Caco-2 (cell line): ENCODE measurements at regions of chr5 and their contacts with region 1.

Region 1: GRCh38 chr5:138213161-138214029 is at the start of gene CDC23:
- DNase-seq: peak; percentile 96 to 97
- H3K4me3 ChIP-seq: peak within 1 kb of the TSS; percentile 99
- H3K4me3 Mint-ChIP-seq: peak within 1 kb of the TSS; percentile 99
- H3K27ac Mint-ChIP-seq: peak within 1 kb of the TSS; percentile 99
- H3K4me1 ChIP-seq: no peaks in the 10 kb centered on the region
- H3K4me1 Mint-ChIP-seq: no peaks in the 10 kb centered on the region
- H3K27me3 ChIP-seq: no peaks in the 10 kb centered on the region
- H3K27me3 Mint-ChIP-seq: no peaks in the 10 kb centered on the region
- CTCF ChIP-seq: no peak
- total RNA-seq, gene CDC23: 52.9 and 60.7 TPM in 2 replicates

Region 2: DNA sequence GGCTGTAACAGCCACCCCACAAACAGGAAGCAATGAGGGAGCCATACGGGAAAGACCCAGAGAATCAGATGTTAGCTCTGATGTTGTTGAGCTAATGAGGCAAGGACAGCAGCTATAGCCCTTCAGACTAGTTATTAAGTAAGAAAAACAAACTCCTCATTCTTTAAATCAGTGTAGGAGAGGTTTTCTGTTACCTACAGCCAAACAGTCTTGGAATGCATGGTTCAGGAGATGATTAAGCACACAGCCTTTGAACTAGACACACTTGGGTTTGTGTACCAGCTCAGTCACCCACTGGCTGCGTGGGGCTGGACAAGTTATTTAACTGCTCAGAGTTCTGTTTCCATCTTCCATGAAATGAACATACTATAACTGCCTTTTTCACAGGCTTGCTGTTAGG is 782.3 kb before region 1 on chr5:
- CTCF ChIA-PET with region 1: no interaction called
- POLR2A ChIA-PET with region 1: no interaction called
- intact Hi-C with region 1: no loop called
- DNase-seq: no peak
- H3K4me3 ChIP-seq: no peak overlapping the region
- H3K4me3 Mint-ChIP-seq: no peak overlapping the region
- H3K27ac Mint-ChIP-seq: no peak overlapping the region
- H3K4me1 ChIP-seq: no peaks in the 10 kb centered on the region
- H3K4me1 Mint-ChIP-seq: no peaks in the 10 kb centered on the region
- H3K27me3 ChIP-seq: no peaks in the 10 kb centered on the region
- H3K27me3 Mint-ChIP-seq: peaks cover 13% of the 10 kb centered on the region
- CTCF ChIP-seq: no peak

Region 3: DNA sequence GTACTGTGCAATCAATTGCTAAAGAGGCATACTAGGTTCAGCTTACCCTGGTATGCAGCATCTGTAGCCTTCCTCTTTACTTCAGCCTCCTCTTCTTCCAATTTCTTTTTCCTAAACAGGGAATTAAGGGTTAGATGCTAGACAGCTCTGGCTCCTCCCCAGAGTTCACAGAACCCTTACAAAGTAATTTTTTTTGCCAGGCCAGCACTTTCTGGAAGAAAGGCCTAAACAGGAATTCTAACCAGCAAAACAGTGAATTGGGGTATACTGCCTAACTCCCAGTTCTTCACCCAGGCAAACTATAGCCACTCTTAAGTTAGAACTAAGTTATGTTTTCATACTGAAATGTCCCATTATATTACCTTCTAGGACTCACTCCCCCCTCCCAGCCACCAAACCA is 43.1 kb before region 1 on chr5:
- CTCF ChIA-PET with region 1: no interaction called
- POLR2A ChIA-PET with region 1: no interaction called
- intact Hi-C with region 1: no loop called
- DNase-seq: no peak
- H3K4me3 ChIP-seq: no peak overlapping the region
- H3K4me3 Mint-ChIP-seq: no peak overlapping the region
- H3K27ac Mint-ChIP-seq: no peak overlapping the region
- H3K4me1 ChIP-seq: no peaks in the 10 kb centered on the region
- H3K4me1 Mint-ChIP-seq: no peaks in the 10 kb centered on the region
- H3K27me3 ChIP-seq: no peaks in the 10 kb centered on the region
- H3K27me3 Mint-ChIP-seq: no peaks in the 10 kb centered on the region
- CTCF ChIP-seq: no peak

Region 4: DNA sequence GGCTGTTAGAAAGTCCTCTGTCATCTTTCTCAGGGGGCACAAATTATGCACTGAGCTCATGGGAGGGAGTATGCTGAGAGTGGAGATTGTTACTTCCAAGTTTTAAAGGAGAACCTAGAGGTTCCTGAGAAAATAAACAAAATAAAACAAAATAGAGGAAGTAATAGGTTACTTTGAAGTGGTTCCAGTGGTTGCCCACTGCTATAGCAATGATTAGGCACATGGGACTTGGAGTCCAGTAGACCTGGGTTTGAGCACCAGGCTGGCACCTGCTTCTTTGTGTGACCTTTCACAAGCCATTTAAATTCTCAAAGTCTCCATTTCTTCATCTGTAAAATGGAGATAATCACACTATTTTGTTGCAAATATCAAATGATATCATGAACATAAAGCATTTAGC is 13.5 kb after region 1 on chr5:
- CTCF ChIA-PET with region 1: interaction called, 4 read pairs
- POLR2A ChIA-PET with region 1: interaction called, 6 read pairs
- intact Hi-C with region 1: loop called (anchors 1 kb)
- DNase-seq: no peak
- H3K4me3 ChIP-seq: no peak overlapping the region
- H3K4me3 Mint-ChIP-seq: no peak overlapping the region
- H3K27ac Mint-ChIP-seq: no peak overlapping the region
- H3K4me1 ChIP-seq: no peaks in the 10 kb centered on the region
- H3K4me1 Mint-ChIP-seq: peaks cover 14% of the 10 kb centered on the region
- H3K27me3 ChIP-seq: no peaks in the 10 kb centered on the region
- H3K27me3 Mint-ChIP-seq: no peaks in the 10 kb centered on the region
- CTCF ChIP-seq: no peak

Region 5: GRCh38 chr5:138252944-138253343 is 39.5 kb after region 1 on chr5:
- CTCF ChIA-PET with region 1: no interaction called
- POLR2A ChIA-PET with region 1: no interaction called
- intact Hi-C with region 1: no loop called
- DNase-seq: no peak
- H3K4me3 ChIP-seq: no peak overlapping the region
- H3K4me3 Mint-ChIP-seq: no peak overlapping the region
- H3K27ac Mint-ChIP-seq: no peak overlapping the region
- H3K4me1 ChIP-seq: no peaks in the 10 kb centered on the region
- H3K4me1 Mint-ChIP-seq: no peaks in the 10 kb centered on the region
- H3K27me3 ChIP-seq: no peaks in the 10 kb centered on the region
- H3K27me3 Mint-ChIP-seq: no peaks in the 10 kb centered on the region
- CTCF ChIP-seq: no peak

Region 6: GRCh38 chr5:138331449-138332368 is 118.3 kb after region 1 on chr5 and contains the start of gene CDC25C:
- CTCF ChIA-PET with region 1: no interaction called
- POLR2A ChIA-PET with region 1: interaction called, 12 read pairs
- intact Hi-C with region 1: loop called (anchors 5 kb)
- DNase-seq: peak; percentile 98 to 99
- H3K4me3 ChIP-seq: peak within 1 kb of the TSS; percentile 69
- H3K4me3 Mint-ChIP-seq: peak within 1 kb of the TSS; percentile 95
- H3K27ac Mint-ChIP-seq: peak within 1 kb of the TSS; percentile 82
- H3K4me1 ChIP-seq: no peaks in the 10 kb centered on the region
- H3K4me1 Mint-ChIP-seq: peaks cover under 1% of the 10 kb centered on the region
- H3K27me3 ChIP-seq: no peaks in the 10 kb centered on the region
- H3K27me3 Mint-ChIP-seq: no peaks in the 10 kb centered on the region
- CTCF ChIP-seq: no peak
- total RNA-seq, gene CDC25C: 22.7 and 22.9 TPM in 2 replicates